IMR-90 (cell line): ENCODE measurements at regions of chr3 and their contacts with region 1.

Region 1: GRCh38 chr3:130892759-130893375 is 1.0 kb upstream of the ATP2C1 start:
- DNase-seq: peak; percentile 79
- ATAC-seq: peak; percentile 36
- H3K4me3 ChIP-seq: peak overlapping the region; percentile 80
- H3K27ac ChIP-seq: peak overlapping the region; percentile 95
- H3K4me1 ChIP-seq: 0 out of 2 replicates have a peak, but pooled peaks cover 1% of the 10 kb centered on the region
- H3K27me3 ChIP-seq: no peaks in the 10 kb centered on the region
- CTCF ChIP-seq: peak; percentile 86
- POLR2A ChIP-seq: no peak
- RAD21 ChIP-seq: peak; percentile 65

Region 2: GRCh38 chr3:130093741-130094391 is 799.0 kb before region 1 on chr3:
- CTCF ChIA-PET with region 1: no interaction called
- POLR2A ChIA-PET with region 1: no interaction called
- dilution Hi-C with region 1: no loop called
- in situ Hi-C with region 1: no loop called
- intact Hi-C with region 1: no loop called
- DNase-seq: no peak
- ATAC-seq: no peak
- H3K4me3 ChIP-seq: no peak overlapping the region
- H3K27ac ChIP-seq: no peak overlapping the region
- H3K4me1 ChIP-seq: no peaks in the 10 kb centered on the region
- H3K27me3 ChIP-seq: no peaks in the 10 kb centered on the region
- CTCF ChIP-seq: no peak
- POLR2A ChIP-seq: no peak
- RAD21 ChIP-seq: no peak

Region 3: DNA sequence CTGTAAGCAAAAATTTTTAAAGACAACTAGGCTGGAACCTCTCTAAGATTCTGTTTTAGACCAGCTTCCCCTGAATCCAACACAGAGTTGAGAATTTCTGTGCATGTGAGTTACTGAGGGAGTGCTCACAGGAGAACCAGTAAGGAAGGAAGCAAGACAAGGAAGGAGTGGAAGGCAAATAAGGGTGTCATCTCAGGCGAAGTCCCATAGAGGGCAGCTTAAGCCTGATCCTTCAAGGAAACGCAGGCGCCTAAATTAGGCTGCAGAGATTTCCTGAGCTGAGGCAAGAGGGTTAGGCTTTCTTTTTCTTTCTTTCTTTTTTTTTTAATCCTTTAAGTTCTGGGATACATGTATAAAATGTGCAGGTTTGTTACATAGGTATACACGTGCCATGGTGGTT is 412.1 kb before region 1 on chr3:
- CTCF ChIA-PET with region 1: no interaction called
- POLR2A ChIA-PET with region 1: no interaction called
- dilution Hi-C with region 1: no loop called
- in situ Hi-C with region 1: no loop called
- intact Hi-C with region 1: loop called (anchors 1 kb)
- DNase-seq: peak; percentile 28
- ATAC-seq: peak; percentile 65
- H3K4me3 ChIP-seq: no peak overlapping the region
- H3K27ac ChIP-seq: no peak overlapping the region
- H3K4me1 ChIP-seq: no peaks in the 10 kb centered on the region
- H3K27me3 ChIP-seq: no peaks in the 10 kb centered on the region
- CTCF ChIP-seq: peak; percentile 36
- POLR2A ChIP-seq: no peak
- RAD21 ChIP-seq: 0 out of 2 replicates have a peak, but pooled peaks have one; percentile 38

Region 4: DNA sequence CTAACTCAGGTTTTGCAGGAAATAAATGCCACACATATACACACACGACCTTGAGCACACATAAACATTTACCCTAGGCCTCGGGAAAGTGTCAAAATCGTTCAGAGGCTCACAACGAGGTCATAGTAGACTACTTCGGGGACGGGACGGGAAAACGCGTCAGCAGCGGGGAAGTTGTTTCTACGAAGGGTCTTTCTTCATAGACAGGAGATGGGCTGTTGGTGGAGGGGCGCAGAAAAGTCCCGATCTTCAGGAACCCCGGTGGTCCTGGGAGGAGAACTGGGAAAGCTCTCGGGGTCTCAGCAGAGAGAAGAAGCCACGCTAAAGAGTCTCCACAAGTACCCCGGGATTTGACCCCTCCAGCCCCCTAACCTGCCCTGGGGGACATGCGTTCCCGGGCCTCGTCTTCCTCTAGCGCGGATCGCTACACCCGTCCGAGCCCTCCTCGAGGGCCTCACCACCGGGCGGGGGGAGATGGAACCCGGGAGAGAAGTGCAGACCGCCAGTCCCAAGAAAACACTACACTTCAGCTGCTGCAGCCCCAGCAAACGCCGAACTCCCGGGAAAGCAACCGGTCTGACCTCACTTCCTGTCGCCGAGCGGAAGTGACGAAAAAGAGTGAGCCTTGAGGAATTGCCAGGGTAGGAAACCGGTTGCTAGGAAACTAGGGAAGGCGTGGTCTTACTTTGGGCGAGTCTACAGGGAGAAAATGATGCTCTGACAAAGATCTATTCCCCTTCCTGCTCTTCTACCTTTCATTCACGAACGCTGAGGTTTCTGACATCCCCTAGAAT is 146.4 kb before region 1 on chr3 and contains the start of gene PIK3R4:
- CTCF ChIA-PET with region 1: no interaction called
- POLR2A ChIA-PET with region 1: no interaction called
- dilution Hi-C with region 1: no loop called
- in situ Hi-C with region 1: loop called (anchors 5 kb)
- intact Hi-C with region 1: no loop called
- DNase-seq: peak; percentile 97
- ATAC-seq: peak; percentile 83
- H3K4me3 ChIP-seq: peak within 1 kb of the TSS; percentile 82
- H3K27ac ChIP-seq: peak within 1 kb of the TSS; percentile 70
- H3K4me1 ChIP-seq: no peaks in the 10 kb centered on the region
- H3K27me3 ChIP-seq: no peaks in the 10 kb centered on the region
- CTCF ChIP-seq: no peak
- POLR2A ChIP-seq: peak; percentile 68
- RAD21 ChIP-seq: no peak
- total RNA-seq, gene PIK3R4: 24.7 and 27.2 TPM in 2 replicates

Region 5: GRCh38 chr3:130870423-130870822 is 22.4 kb before region 1 on chr3:
- CTCF ChIA-PET with region 1: no interaction called
- POLR2A ChIA-PET with region 1: no interaction called
- dilution Hi-C with region 1: no loop called
- in situ Hi-C with region 1: no loop called
- intact Hi-C with region 1: no loop called
- DNase-seq: no peak
- ATAC-seq: no peak
- H3K4me3 ChIP-seq: no peak overlapping the region
- H3K27ac ChIP-seq: no peak overlapping the region
- H3K4me1 ChIP-seq: no peaks in the 10 kb centered on the region
- H3K27me3 ChIP-seq: no peaks in the 10 kb centered on the region
- CTCF ChIP-seq: no peak
- POLR2A ChIP-seq: no peak
- RAD21 ChIP-seq: no peak

Region 6: DNA sequence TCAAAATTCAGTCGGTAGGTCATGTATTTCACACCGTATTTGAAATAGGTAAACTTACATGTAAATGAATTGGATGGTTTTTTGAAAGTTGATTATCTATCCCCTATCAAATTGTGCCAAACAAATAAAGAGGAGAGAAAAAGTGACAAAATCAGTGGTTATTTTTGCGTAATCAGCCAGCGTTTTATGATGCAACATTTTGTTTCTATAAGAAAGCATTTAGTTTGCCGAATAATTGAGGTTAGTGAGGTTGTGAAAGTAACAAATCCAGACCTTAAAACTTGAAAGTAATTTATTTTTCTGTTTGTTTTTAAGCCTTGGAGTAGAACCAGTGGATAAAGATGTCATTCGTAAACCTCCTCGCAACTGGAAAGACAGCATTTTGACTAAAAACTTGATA is 104.4 kb after region 1 on chr3:
- CTCF ChIA-PET with region 1: no interaction called
- POLR2A ChIA-PET with region 1: no interaction called
- dilution Hi-C with region 1: no loop called
- in situ Hi-C with region 1: no loop called
- intact Hi-C with region 1: loop called (anchors 2 kb)
- DNase-seq: no peak
- ATAC-seq: no peak
- H3K4me3 ChIP-seq: no peak overlapping the region
- H3K27ac ChIP-seq: no peak overlapping the region
- H3K4me1 ChIP-seq: peaks cover 4% of the 10 kb centered on the region; the same call in 1 of the 2 replicates
- H3K27me3 ChIP-seq: no peaks in the 10 kb centered on the region
- CTCF ChIP-seq: no peak
- POLR2A ChIP-seq: no peak
- RAD21 ChIP-seq: no peak

Region 7: DNA sequence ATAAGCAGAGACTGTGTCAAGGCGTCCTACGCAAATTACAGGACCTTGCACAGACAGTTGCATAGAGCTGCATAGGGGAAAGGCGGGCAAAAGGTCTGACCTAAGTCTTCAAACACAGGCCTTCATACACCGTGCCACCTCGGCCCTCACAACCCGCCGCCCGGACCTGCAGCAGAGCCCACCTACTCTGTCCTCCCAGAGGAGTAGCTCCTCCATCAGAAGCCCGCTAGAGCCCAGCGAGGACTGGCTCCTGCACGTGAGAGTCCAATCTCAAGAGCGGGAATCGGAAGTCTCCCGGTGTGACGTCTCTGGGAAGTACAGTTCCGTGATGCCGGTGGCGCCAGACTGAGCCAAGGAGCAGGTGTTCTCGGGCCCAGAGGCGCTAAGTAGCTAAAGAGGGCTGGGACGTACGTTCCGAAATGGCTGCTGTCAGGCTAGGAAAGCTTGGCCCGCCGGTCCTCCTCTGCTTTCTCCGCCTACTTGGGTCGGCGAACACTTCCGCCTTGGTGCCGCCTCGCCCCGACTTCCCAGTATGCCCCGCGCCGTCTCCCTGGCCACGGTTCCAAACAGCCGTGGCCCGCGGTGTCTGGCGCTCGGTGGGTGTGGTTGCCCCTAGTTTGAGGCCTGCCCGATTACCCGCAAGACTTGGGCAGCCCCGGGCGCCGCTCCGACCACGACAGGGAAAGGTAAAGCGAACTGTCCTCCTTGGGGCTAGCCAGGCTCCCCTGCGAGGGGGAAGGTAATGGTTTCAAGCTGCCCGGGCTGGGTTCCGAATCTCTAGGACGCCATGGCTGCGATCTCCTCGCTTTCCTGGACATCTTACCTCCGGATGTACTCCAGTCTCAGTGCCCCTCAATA is 133.7 kb after region 1 on chr3 and contains the starts of genes ASTE1 and NEK11:
- CTCF ChIA-PET with region 1: no interaction called
- POLR2A ChIA-PET with region 1: interaction called, 3 read pairs
- dilution Hi-C with region 1: no loop called
- in situ Hi-C with region 1: no loop called
- intact Hi-C with region 1: loop called (anchors 5 kb)
- DNase-seq: peak; percentile 73
- ATAC-seq: peak; percentile 99
- H3K4me3 ChIP-seq: peak within 1 kb of the TSS; percentile 96
- H3K27ac ChIP-seq: peak within 1 kb of the TSS; percentile 96
- H3K4me1 ChIP-seq: peaks cover 2% of the 10 kb centered on the region; the same call in 1 of the 2 replicates
- H3K27me3 ChIP-seq: no peaks in the 10 kb centered on the region
- CTCF ChIP-seq: no peak
- POLR2A ChIP-seq: peak; percentile 70
- RAD21 ChIP-seq: no peak
- total RNA-seq, gene ASTE1: 7.5 and 8.1 TPM in 2 replicates
- total RNA-seq, gene NEK11: 1.6 and 1.9 TPM in 2 replicates